ENCODE measurements at regions of chr19 and their contacts with region 1.

Region 1: DNA sequence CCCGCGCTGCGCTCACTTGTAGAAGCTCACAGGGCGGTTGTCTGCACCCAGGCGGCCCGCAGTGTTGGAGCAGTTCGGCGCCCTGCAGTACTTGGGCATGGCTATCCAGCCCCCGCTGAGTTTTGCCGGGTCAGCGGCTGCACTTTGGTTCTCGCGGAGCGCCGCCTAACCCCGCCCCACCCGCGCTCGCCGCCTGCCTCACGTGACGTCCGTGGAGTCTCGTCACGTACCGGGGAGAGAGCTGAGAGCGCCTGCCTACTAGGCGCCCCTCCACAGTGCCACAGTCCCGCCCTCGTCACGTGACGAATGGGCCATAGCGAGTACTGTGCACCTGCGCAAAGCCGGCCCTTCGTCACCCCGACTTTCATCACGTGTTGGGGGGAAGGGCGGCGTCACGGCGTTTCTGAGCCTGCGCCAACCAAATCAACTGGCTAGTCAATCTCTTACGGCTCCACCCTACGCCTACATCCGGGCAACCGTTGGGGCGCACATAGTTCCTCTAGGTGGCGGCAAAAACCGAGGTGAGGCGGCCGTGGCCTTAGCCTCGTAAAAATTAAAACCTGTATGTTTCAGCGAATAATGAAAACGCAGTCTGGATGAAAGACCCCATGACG is at the start of gene THAP8:
- DNase-seq: peak; percentile 97
- ATAC-seq: peak; percentile 82
- H3K4me3 ChIP-seq: peak within 1 kb of the TSS; percentile 74 to 76 (median 75)
- H3K27ac ChIP-seq: peak within 1 kb of the TSS; percentile 83
- H3K4me1 ChIP-seq: peaks cover 69% of the 10 kb centered on the region
- H3K27me3 ChIP-seq: no peaks in the 10 kb centered on the region; a peak in 1 of 5 replicates
- CTCF ChIP-seq: peak; percentile 59
- EP300 ChIP-seq: 0 out of 4 replicates have a peak, but pooled peaks of 1 of the 2 experiments have one; percentile 15
- POLR2A ChIP-seq: peak; percentile 69 to 94
- RAD21 ChIP-seq: peak; percentile 46
- total RNA-seq, gene THAP8: 1.4 and 1.7 TPM in 2 replicates

Region 2: GRCh38 chr19:35995048-35995993 is 58.9 kb before region 1 on chr19 and contains the start of gene SDHAF1:
- CTCF ChIA-PET with region 1: no interaction called
- POLR2A ChIA-PET with region 1: interaction called, 14 read pairs
- in situ Hi-C with region 1: loop called (anchors 5 kb)
- intact Hi-C with region 1: loop called (anchors 5 kb)
- DNase-seq: peak; percentile 90
- ATAC-seq: peak; percentile 87
- H3K4me3 ChIP-seq: peak within 1 kb of the TSS; percentile 85 to 99 (median 86)
- H3K27ac ChIP-seq: peak within 1 kb of the TSS; percentile 84
- H3K4me1 ChIP-seq: peaks cover 56% of the 10 kb centered on the region
- H3K27me3 ChIP-seq: no peaks in the 10 kb centered on the region
- CTCF ChIP-seq: peak; percentile 31
- EP300 ChIP-seq: 0 out of 4 replicates have a peak, but pooled peaks of 1 of the 2 experiments have one; percentile 37
- POLR2A ChIP-seq: peak; percentile 93 to 94
- RAD21 ChIP-seq: peak; percentile 64; the same call in 1 of the 2 replicates
- total RNA-seq, gene SDHAF1: 21.0 and 22.8 TPM in 2 replicates

Region 3: DNA sequence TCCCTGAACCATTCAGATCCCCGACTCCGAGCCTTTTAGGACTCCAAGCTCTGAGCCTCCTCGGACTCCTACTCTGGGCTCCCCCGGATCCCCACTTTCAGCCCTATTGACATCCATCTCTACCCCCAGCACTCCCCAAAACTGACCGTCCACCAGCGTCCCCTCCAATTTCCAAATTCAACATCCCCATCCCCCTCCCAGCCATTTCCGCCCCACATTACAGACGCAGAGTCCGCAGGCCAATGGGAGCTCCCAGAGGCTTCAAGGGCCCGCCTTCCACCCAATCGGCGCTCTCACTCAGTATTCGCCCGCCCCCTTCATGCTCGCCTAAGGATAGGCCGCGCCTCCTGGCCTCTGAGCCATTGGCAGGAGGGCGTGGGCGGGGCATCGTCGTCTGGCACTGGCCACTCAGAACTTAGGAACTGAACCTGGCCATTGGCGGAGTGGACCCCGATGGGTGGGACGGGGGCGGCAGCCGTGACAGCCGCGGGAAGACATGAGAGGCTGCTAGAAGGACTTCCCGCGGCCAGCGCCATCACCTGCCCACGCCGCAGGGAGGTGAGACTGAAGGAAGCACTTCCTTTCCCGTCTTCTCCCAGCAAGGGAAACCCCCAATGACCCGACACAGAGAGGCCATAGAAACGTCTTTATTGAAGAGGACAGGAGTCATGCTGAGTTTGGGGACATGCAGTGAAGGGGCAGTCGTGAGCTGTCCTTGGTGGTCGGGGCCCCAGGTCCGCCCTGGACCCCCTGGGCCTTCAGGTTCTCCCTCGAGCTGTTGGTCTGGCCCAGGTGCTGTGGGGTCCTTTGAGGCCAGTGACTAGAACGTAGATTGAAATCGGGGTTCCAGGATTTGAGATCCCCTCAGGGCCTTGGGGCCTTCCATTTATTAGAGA is 39.9 kb before region 1 on chr19 and contains the start of gene ALKBH6:
- CTCF ChIA-PET with region 1: no interaction called
- POLR2A ChIA-PET with region 1: interaction called, 17 read pairs
- in situ Hi-C with region 1: no loop called
- intact Hi-C with region 1: no loop called
- DNase-seq: peak; percentile 97
- ATAC-seq: peak; percentile 98
- H3K4me3 ChIP-seq: peak within 1 kb of the TSS; percentile 74 to 92 (median 85)
- H3K27ac ChIP-seq: peak within 1 kb of the TSS; percentile 67
- H3K4me1 ChIP-seq: peaks cover 42% of the 10 kb centered on the region
- H3K27me3 ChIP-seq: no peaks in the 10 kb centered on the region; a peak in 1 of 5 replicates
- CTCF ChIP-seq: peak; percentile 48
- EP300 ChIP-seq: no peak
- POLR2A ChIP-seq: peak; percentile 42 to 72; a peak in 3 of 4 replicates
- RAD21 ChIP-seq: no peak
- total RNA-seq, gene ALKBH6: 6.9 and 13.7 TPM in 2 replicates

Region 4: DNA sequence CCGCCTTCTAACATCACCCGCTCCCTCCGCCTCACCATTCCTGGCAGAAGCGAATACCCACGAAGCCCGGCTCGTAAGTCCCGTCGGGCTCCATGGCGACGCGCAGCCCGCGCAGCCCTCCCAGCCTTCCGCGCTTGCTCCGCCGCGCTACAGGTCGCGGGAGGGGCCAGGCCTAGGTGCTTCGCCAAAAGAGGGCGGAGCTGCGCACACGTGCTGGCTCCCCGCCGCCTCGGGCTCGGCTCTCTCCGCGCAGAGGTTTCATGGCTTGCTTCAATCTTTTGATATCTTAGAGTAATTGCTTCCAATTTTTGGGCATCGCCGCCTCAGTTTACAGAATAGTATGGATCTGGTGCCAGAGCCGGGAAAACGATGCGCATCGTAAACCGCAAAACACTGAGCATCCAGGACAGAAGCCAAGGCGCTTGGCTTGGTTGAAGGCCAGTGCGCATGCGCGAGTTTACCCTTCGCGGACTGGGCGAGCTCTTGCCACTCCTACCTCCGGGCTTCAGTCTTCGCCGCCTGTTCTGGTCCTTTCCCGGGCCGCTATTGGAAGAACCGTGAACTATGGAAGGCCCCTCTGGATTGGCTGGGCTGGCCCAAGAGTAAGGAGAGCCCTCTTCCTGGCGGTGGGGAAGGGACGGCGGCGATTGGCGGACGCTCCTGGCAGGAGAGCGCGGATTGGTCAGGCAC is 60.7 kb after region 1 on chr19 and contains the start of gene POLR2I:
- CTCF ChIA-PET with region 1: no interaction called
- POLR2A ChIA-PET with region 1: interaction called, 10 read pairs
- in situ Hi-C with region 1: no loop called
- intact Hi-C with region 1: loop called (anchors 2 kb)
- DNase-seq: peak; percentile 99
- ATAC-seq: peak; percentile 93
- H3K4me3 ChIP-seq: peak within 1 kb of the TSS; percentile 72 to 93 (median 88)
- H3K27ac ChIP-seq: peak within 1 kb of the TSS; percentile 77
- H3K4me1 ChIP-seq: peaks cover 45% of the 10 kb centered on the region
- H3K27me3 ChIP-seq: no peaks in the 10 kb centered on the region; a peak in 1 of 5 replicates
- CTCF ChIP-seq: 0 out of 2 replicates have a peak, but pooled peaks have one; percentile 21
- EP300 ChIP-seq: no peak
- POLR2A ChIP-seq: peak; percentile 60 to 75
- RAD21 ChIP-seq: peak; percentile 66
- total RNA-seq, gene POLR2I: 101 and 104 TPM in 2 replicates

Region 5: GRCh38 chr19:37217855-37218591 is 1163.8 kb after region 1 on chr19 and contains the start of gene ZNF383:
- CTCF ChIA-PET with region 1: no interaction called
- POLR2A ChIA-PET with region 1: no interaction called
- in situ Hi-C with region 1: no loop called
- intact Hi-C with region 1: loop called (anchors 10 kb)
- DNase-seq: peak; percentile 92
- ATAC-seq: peak; percentile 99
- H3K4me3 ChIP-seq: peak within 1 kb of the TSS; percentile 85 to 96 (median 88)
- H3K27ac ChIP-seq: peak within 1 kb of the TSS; percentile 89
- H3K4me1 ChIP-seq: peaks cover 12% of the 10 kb centered on the region
- H3K27me3 ChIP-seq: peaks cover 0 to 4% of the 10 kb centered on the region in 2 experiments; a peak in 1 of 5 replicates
- CTCF ChIP-seq: no peak
- EP300 ChIP-seq: no peak
- POLR2A ChIP-seq: peak; percentile 86 to 91
- RAD21 ChIP-seq: peak; percentile 36; the same call in 1 of the 2 replicates
- total RNA-seq, gene ZNF383: 3.7 and 4.1 TPM in 2 replicates

Measured in HepG2 (cell line).